Spleen (tissue), 13 donors: ENCODE measurements at regions of chr12 and their contacts with region 1.

Region 1: GRCh38 chr12:122471324-122472226 is 29.2 kb downstream of the ZCCHC8 start:
- DNase-seq: no peak
- H3K4me3 ChIP-seq: no peak overlapping the region
- H3K27ac ChIP-seq: peak overlapping the region in 5 of 8 donors; percentile 6 to 44 (median 30)
- H3K4me1 ChIP-seq: peaks cover 0 to 12% (median 9%) of the 10 kb centered on the region in 6 donors
- H3K27me3 ChIP-seq: no peaks in the 10 kb centered on the region
- CTCF ChIP-seq: peak; percentile 62 to 85 (median 80)
- POLR2A ChIP-seq: no peak

Region 2: DNA sequence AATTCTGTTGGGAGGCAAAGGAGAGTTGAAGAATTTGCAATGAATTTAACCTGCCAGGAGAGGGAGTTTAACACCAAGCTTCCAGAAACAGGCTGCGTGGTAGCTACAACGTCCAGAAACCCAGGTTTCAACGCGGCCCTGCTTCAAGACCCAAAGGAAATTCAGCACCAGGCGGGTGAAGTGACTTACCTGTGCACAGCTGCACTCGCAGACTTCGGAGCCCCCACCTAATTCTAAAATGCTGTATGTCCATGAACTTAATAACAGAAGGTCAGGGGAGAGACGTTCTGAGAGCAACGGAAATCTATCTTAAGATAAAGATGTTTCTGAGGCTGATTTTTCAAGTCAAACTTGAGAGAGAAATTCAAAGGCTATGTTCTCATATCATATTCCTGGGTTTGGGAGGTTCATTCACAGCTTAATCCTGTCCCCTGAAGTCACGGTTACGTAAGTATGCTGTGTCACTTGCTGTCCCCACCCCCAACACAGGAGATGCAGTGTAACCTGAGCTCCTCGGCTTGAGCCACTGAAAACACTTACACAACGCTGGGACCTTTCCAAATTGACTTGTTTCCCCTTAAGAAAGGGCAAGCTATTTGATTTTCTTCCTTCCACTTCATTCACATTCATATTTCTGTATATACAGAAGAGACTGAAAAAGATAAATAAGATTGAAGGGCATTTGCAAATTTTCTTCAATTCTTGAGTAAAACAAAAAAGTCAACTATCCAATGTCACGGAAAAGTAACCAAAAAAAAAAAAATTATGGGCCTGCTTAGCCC is 71.8 kb before region 1 on chr12:
- intact Hi-C with region 1: loop called (anchors 2 kb)
- DNase-seq: peak; percentile 78
- H3K4me3 ChIP-seq: peak overlapping the region in 2 of 8 donors; percentile 3 to 46
- H3K27ac ChIP-seq: peak overlapping the region; percentile 56 to 86 (median 78)
- H3K4me1 ChIP-seq: peaks cover 10 to 62% (median 35%) of the 10 kb centered on the region in 6 donors
- H3K27me3 ChIP-seq: no peaks in the 10 kb centered on the region
- CTCF ChIP-seq: peak; percentile 47 to 78 (median 69)
- POLR2A ChIP-seq: no peak